ENCODE measurements at regions of chr3 and their contacts with region 1.

Region 1: GRCh38 chr3:107064445-107065060 is 312.7 kb upstream of the CCDC54 start:
- DNase-seq: no peak

Region 2: GRCh38 chr3:106176734-106177133 is 887.8 kb before region 1 on chr3:
- intact Hi-C with region 1: no loop called
- DNase-seq: no peak

Region 3: DNA sequence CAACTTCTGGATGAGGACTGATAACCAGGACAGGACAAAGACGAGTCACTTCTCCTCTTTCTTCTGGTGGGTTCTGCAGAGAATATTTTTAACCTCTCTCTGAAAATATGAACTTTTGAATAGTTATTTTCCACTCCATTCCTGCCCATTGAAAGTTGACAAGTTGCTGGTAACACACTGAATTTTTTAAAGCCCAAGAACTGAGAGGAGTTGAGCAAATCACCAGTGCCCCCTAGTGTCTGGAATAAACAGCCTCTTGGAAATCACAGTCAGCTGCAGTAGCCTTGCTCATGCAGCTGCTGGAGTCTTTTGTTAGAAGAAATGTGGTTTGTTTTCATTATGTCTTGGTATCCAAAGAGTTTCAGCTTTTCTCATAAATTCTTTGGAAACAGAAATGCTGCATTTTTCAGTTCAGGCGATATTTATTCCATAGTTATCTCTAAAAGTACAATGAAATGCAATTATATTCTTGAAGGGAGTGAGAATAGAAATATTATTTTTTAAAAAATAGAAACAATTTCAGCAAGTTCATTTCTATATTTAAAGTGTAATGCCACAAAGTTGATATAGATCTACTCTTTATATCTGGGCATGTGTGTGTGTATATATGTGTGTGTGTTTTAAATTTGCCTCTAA is 454.8 kb before region 1 on chr3:
- intact Hi-C with region 1: loop called (anchors 10 kb)
- DNase-seq: no peak

Region 4: GRCh38 chr3:106805625-106806024 is 258.9 kb before region 1 on chr3:
- intact Hi-C with region 1: no loop called
- DNase-seq: no peak

Region 5: DNA sequence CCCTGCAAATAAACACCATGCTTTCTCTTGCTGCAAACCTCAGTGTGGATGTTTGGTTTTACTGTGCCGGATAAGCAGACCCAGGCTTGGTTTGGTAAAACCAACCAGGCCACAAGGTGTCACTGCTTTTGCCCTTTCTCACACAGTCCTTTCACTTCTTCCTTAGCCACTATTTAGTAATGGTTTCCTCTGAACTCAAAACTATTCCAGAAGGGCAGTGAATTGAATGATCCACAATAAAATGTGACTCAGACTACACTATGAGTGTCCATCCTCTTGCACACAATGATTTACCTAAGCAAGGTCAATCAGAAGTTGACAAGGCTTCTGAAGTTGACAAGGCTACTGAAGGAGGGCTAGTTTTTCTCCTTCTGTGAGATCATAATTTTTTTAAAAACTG is 239.7 kb before region 1 on chr3:
- intact Hi-C with region 1: loop called (anchors 2 kb)
- DNase-seq: no peak